ENCODE measurements at regions of chr10 and their contacts with region 1.

Region 1: GRCh38 chr10:29482591-29483431 is 152.0 kb downstream of the SVIL start:
- DNase-seq: peak; percentile 74
- ATAC-seq: peak; percentile 90
- H3K4me3 Mint-ChIP-seq: peak overlapping the region; percentile 48
- H3K27ac Mint-ChIP-seq: peak overlapping the region; percentile 84
- H3K4me1 Mint-ChIP-seq: peaks cover 69% of the 10 kb centered on the region
- H3K27me3 Mint-ChIP-seq: no peaks in the 10 kb centered on the region

Region 2: DNA sequence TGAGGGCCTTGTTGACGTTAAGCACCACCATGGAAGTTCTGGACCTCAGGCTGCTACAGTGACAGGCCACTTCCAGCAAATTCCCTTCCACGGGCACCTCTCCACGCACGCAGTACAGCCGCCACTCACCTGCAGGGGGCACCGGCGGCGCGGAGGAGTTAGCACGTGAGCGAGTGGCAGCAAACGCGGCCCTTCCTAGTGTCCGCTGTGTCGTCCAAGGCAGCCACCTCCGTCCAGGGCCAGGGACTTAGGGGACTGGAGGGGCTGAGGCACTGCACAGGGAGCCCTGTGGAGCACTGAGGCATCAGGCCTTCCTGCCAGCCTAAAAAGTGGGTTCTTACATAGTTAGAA is 12.5 kb before region 1 on chr10:
- CTCF ChIA-PET with region 1: interaction called, 18 read pairs
- POLR2A ChIA-PET with region 1: no interaction called
- DNase-seq: peak; percentile 44
- ATAC-seq: no peak
- H3K4me3 Mint-ChIP-seq: no peak overlapping the region
- H3K27ac Mint-ChIP-seq: no peak overlapping the region
- H3K4me1 Mint-ChIP-seq: peaks cover 18% of the 10 kb centered on the region
- H3K27me3 Mint-ChIP-seq: no peaks in the 10 kb centered on the region

Measured in activated CD8-positive, alpha-beta T cell treated with anti-CD3 and anti-CD28 coated beads, Interleukin-2, amount 10 ng/mL, durations not matched to agents 7 days and 5 days (primary cell).